Common myeloid progenitor, CD34-positive (primary cell): ENCODE measurements at regions of chr14 and their contacts with region 1.

Region 1: DNA sequence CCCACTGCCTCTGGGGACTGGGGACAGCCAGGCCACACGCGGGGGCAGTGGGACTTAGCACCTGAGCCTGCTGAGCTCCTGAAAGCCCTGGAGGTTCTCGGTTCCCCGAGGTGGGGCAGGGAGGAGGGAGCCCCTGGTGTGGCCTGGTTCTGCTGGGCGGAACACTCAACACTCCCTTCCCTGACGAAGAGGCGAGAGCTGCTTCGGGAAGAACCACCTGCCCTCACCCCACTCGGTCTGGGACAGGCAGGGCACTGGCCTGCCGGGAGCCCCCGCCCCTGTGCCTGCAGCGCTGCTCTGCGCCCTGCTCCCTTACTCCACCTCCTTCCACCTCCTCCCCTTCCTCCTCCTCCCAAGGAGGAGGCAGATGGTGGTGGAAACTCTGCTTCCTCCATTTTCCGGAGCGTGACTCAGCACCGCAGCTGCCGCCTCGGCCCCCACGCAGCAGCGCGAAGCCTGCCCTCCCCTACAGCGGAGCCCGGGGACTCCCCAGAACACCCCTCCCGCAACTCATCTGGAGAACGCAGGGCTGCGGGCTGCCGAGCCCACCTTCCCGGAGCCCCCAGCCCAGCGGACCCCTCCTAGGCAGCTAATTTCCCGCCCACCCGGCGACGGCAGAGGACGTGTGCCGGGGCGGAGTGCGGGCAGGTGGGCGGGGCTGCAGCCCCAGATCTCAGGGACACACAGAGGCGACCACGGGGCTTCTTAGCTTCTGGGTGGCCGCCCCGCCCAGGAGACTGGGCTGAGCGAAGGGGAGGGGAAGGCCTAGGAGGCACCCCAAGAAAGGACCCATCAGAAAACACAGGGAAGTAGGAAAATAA is 11.7 kb upstream of the INF2 start:
- DNase-seq: peak; percentile 86 to 96 (median 95)
- H3K4me3 ChIP-seq: peak overlapping the region; percentile 22 to 66 (median 54)
- H3K27ac ChIP-seq: peak overlapping the region in 1 of 2 experiments; percentile 81
- H3K4me1 ChIP-seq: peaks cover 0 to 67% (median 55%) of the 10 kb centered on the region in 4 experiments
- H3K27me3 ChIP-seq: no peaks in the 10 kb centered on the region

Region 2: GRCh38 chr14:104665657-104666522 is 11.8 kb before region 1 on chr14:
- CTCF ChIA-PET with region 1: interaction called, 18 read pairs
- POLR2A ChIA-PET with region 1: interaction called, 5 read pairs
- DNase-seq: peak in 2 of 3 donors; percentile 49 to 58
- H3K4me3 ChIP-seq: peak overlapping the region in 1 of 7 experiments; percentile 11
- H3K27ac ChIP-seq: no peak overlapping the region
- H3K4me1 ChIP-seq: peaks cover 0 to 14% (median 8%) of the 10 kb centered on the region in 4 experiments
- H3K27me3 ChIP-seq: no peaks in the 10 kb centered on the region

Region 3: GRCh38 chr14:104689881-104690786 is 12.4 kb after region 1 on chr14:
- CTCF ChIA-PET with region 1: interaction called, 10 read pairs
- POLR2A ChIA-PET with region 1: interaction called, 3 read pairs
- DNase-seq: peak in 1 of 3 donors; percentile 14
- H3K4me3 ChIP-seq: peak overlapping the region; percentile 57 to 83 (median 75)
- H3K27ac ChIP-seq: peak overlapping the region in 1 of 2 experiments; percentile 54
- H3K4me1 ChIP-seq: peaks cover 0 to 68% (median 62%) of the 10 kb centered on the region in 4 experiments
- H3K27me3 ChIP-seq: no peaks in the 10 kb centered on the region